Endothelial cell of umbilical vein (primary cell): ENCODE measurements at regions of chr17 and their contacts with region 1.

Region 1: GRCh38 chr17:34177642-34178041 is 77.4 kb upstream of the CCL2 start:
- DNase-seq: peak; percentile 90
- H3K4me3 ChIP-seq: no peak overlapping the region
- H3K27ac ChIP-seq: peak overlapping the region; percentile 67
- H3K4me1 ChIP-seq: peaks cover 19% of the 10 kb centered on the region
- H3K27me3 ChIP-seq: peaks cover 21 to 25% of the 10 kb centered on the region in 2 experiments
- CTCF ChIP-seq: no peak
- POLR2A ChIP-seq: no peak

Region 2: GRCh38 chr17:33981711-33982601 is 195.7 kb before region 1 on chr17:
- CTCF ChIA-PET with region 1: no interaction called
- POLR2A ChIA-PET with region 1: no interaction called
- dilution Hi-C with region 1: no loop called
- intact Hi-C with region 1: no loop called
- DNase-seq: no peak
- H3K4me3 ChIP-seq: no peak overlapping the region
- H3K27ac ChIP-seq: no peak overlapping the region
- H3K4me1 ChIP-seq: no peaks in the 10 kb centered on the region
- H3K27me3 ChIP-seq: no peaks in the 10 kb centered on the region
- CTCF ChIP-seq: no peak
- POLR2A ChIP-seq: no peak

Region 3: GRCh38 chr17:34207572-34207971 is 29.9 kb after region 1 on chr17:
- CTCF ChIA-PET with region 1: no interaction called
- POLR2A ChIA-PET with region 1: no interaction called
- dilution Hi-C with region 1: no loop called
- intact Hi-C with region 1: no loop called
- DNase-seq: no peak
- H3K4me3 ChIP-seq: no peak overlapping the region
- H3K27ac ChIP-seq: no peak overlapping the region
- H3K4me1 ChIP-seq: no peaks in the 10 kb centered on the region
- H3K27me3 ChIP-seq: peaks cover 2 to 3% of the 10 kb centered on the region in 2 experiments
- CTCF ChIP-seq: no peak
- POLR2A ChIP-seq: no peak

Region 4: GRCh38 chr17:34248511-34249024 is 70.9 kb after region 1 on chr17:
- CTCF ChIA-PET with region 1: no interaction called
- POLR2A ChIA-PET with region 1: no interaction called
- dilution Hi-C with region 1: no loop called
- intact Hi-C with region 1: loop called (anchors 1 kb)
- DNase-seq: peak; percentile 92
- H3K4me3 ChIP-seq: no peak overlapping the region
- H3K27ac ChIP-seq: peak overlapping the region; percentile 99
- H3K4me1 ChIP-seq: peaks cover 66% of the 10 kb centered on the region
- H3K27me3 ChIP-seq: no peaks in the 10 kb centered on the region
- CTCF ChIP-seq: no peak
- POLR2A ChIP-seq: no peak